Caco-2 (cell line): ENCODE measurements at regions of chr9 and their contacts with region 1.

Region 1: GRCh38 chr9:121059998-121060636 is 10.0 kb upstream of the C5 start:
- DNase-seq: peak in 1 of 2 experiments; percentile 64
- H3K4me3 ChIP-seq: no peak overlapping the region
- H3K4me3 Mint-ChIP-seq: no peak overlapping the region
- H3K27ac Mint-ChIP-seq: no peak overlapping the region
- H3K4me1 ChIP-seq: peaks cover 15% of the 10 kb centered on the region; the same call in 1 of the 2 replicates
- H3K4me1 Mint-ChIP-seq: peaks cover 20% of the 10 kb centered on the region
- H3K27me3 ChIP-seq: no peaks in the 10 kb centered on the region
- H3K27me3 Mint-ChIP-seq: no peaks in the 10 kb centered on the region
- CTCF ChIP-seq: peak; percentile 66 to 76

Region 2: DNA sequence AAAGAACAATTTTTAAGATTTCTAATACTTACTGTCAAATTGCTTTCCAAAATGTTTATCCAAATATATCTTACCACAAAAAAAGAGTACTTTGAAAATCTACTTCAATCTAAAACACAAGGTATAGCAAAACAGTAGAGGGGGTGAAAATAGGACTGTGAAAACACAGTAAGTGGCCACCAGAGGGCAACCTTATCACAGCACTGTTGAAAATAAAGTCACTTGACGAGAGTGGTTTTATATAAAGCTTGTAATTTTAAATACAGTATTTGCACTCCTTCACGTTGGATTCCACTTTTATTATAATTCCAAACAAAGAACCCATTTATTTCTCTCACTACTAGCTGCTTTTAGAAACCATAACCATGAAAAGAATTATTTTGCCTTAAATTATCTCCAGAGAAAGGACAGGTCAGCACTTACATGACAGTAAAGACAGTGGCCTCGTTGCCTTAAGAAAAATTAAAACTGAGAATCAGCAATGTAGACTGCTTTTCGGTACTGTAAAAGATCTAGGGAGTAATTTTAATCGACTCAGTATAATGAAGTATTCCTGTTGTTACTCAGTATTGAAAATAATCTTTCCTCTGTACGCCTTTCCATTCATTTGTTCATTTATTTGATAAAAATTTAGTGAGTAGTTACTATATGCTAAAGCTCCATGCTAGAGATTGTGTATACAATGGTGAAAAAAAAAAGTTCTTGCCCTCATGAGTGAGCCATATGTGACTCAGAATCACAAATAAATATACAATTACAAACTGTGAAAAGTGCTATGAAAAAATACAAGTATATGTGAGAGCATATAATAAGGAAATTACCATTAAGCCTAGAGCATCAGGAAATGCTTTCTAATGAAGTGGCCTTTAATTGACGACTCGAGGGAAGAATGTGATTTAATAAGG is 440.1 kb before region 1 on chr9:
- CTCF ChIA-PET with region 1: no interaction called
- POLR2A ChIA-PET with region 1: no interaction called
- intact Hi-C with region 1: loop called (anchors 10 kb)
- DNase-seq: peak; percentile 50
- H3K4me3 ChIP-seq: no peak overlapping the region
- H3K4me3 Mint-ChIP-seq: no peak overlapping the region
- H3K27ac Mint-ChIP-seq: no peak overlapping the region
- H3K4me1 ChIP-seq: 0 out of 2 replicates have a peak, but pooled peaks cover 6% of the 10 kb centered on the region
- H3K4me1 Mint-ChIP-seq: peaks cover 22% of the 10 kb centered on the region
- H3K27me3 ChIP-seq: no peaks in the 10 kb centered on the region
- H3K27me3 Mint-ChIP-seq: no peaks in the 10 kb centered on the region
- CTCF ChIP-seq: peak; percentile 80 to 85

Region 3: DNA sequence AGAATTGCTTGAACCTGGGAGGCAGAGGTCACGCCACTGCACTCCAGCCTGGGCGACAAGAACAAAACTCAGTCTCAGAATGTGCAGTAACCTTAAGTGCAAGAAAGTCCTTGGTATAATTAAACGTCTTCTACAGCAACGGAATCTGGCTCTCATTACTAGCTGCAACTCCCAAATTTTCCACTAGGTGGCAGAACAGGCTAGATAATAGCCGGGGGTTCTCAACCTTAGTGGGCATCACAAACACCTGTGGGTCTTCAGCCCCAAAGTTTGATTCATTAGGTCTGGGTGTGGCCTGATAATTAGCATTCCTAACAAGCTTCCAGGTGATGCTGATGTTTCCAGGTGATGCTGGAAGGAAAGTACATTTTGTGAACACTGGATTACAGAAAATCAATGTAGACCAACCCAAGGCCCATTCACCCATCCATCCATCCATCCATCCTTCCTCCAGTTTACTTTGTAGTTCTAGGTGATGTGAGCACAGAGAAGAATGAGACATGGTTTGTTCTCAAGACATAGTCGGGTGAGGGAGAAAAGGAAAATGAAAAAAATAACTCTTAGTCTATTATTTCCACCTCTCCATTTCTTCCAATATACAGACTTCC is 304.2 kb before region 1 on chr9:
- CTCF ChIA-PET with region 1: interaction called, 9 read pairs
- POLR2A ChIA-PET with region 1: no interaction called
- intact Hi-C with region 1: loop called (anchors 2 kb)
- DNase-seq: peak; percentile 54 to 76
- H3K4me3 ChIP-seq: no peak overlapping the region
- H3K4me3 Mint-ChIP-seq: no peak overlapping the region
- H3K27ac Mint-ChIP-seq: no peak overlapping the region
- H3K4me1 ChIP-seq: no peaks in the 10 kb centered on the region
- H3K4me1 Mint-ChIP-seq: no peaks in the 10 kb centered on the region
- H3K27me3 ChIP-seq: no peaks in the 10 kb centered on the region
- H3K27me3 Mint-ChIP-seq: no peaks in the 10 kb centered on the region
- CTCF ChIP-seq: peak; percentile 79 to 87

Region 4: GRCh38 chr9:120998111-120998510 is 62.0 kb before region 1 on chr9:
- CTCF ChIA-PET with region 1: interaction called, 11 read pairs
- POLR2A ChIA-PET with region 1: no interaction called
- intact Hi-C with region 1: no loop called
- DNase-seq: no peak
- H3K4me3 ChIP-seq: no peak overlapping the region
- H3K4me3 Mint-ChIP-seq: no peak overlapping the region
- H3K27ac Mint-ChIP-seq: no peak overlapping the region
- H3K4me1 ChIP-seq: peaks cover 5% of the 10 kb centered on the region; the same call in 1 of the 2 replicates
- H3K4me1 Mint-ChIP-seq: no peaks in the 10 kb centered on the region
- H3K27me3 ChIP-seq: no peaks in the 10 kb centered on the region
- H3K27me3 Mint-ChIP-seq: no peaks in the 10 kb centered on the region
- CTCF ChIP-seq: no peak

Region 5: GRCh38 chr9:121034529-121034928 is 25.6 kb before region 1 on chr9:
- CTCF ChIA-PET with region 1: interaction called, 18 read pairs
- POLR2A ChIA-PET with region 1: no interaction called
- intact Hi-C with region 1: loop called (anchors 1 kb)
- DNase-seq: no peak
- H3K4me3 ChIP-seq: no peak overlapping the region
- H3K4me3 Mint-ChIP-seq: no peak overlapping the region
- H3K27ac Mint-ChIP-seq: no peak overlapping the region
- H3K4me1 ChIP-seq: peaks cover 4% of the 10 kb centered on the region; the same call in 1 of the 2 replicates
- H3K4me1 Mint-ChIP-seq: no peaks in the 10 kb centered on the region
- H3K27me3 ChIP-seq: no peaks in the 10 kb centered on the region
- H3K27me3 Mint-ChIP-seq: no peaks in the 10 kb centered on the region
- CTCF ChIP-seq: peak in 1 of 2 experiments; percentile 33

Region 6: DNA sequence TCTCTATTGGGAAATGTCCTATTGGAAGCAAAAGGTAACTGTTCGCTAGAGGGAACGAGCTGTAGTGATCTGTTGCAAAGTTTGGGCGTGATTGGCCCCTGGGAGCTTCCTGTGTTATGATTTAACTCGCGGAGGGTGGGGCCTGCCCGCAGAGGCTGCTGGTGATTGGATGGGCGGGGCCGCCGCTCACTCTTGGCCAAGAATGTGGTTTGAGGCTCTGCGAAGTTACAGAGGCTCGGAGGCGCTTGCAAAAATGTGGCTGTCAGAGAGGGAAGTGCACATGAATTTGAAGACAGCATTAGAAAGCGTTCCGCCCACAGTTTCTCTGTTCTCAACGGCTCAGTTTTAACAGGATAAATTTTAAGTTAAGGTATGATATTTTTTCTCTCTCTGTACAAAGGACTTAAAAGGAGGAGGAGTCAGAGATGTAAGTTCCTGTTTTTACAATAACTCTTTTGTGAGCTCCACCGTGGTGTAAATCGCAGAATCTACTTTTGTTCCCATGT is 61.5 kb after region 1 on chr9:
- CTCF ChIA-PET with region 1: interaction called, 10 read pairs
- POLR2A ChIA-PET with region 1: no interaction called
- intact Hi-C with region 1: no loop called
- DNase-seq: peak; percentile 97
- H3K4me3 ChIP-seq: peak overlapping the region; percentile 48
- H3K4me3 Mint-ChIP-seq: peak overlapping the region; percentile 92
- H3K27ac Mint-ChIP-seq: peak overlapping the region; percentile 84
- H3K4me1 ChIP-seq: peaks cover 3% of the 10 kb centered on the region; the same call in 1 of the 2 replicates
- H3K4me1 Mint-ChIP-seq: no peaks in the 10 kb centered on the region
- H3K27me3 ChIP-seq: no peaks in the 10 kb centered on the region
- H3K27me3 Mint-ChIP-seq: no peaks in the 10 kb centered on the region
- CTCF ChIP-seq: no peak